ENCODE measurements at regions of chr17 and their contacts with region 1.

Region 1: GRCh38 chr17:29369831-29370735 is 20.1 kb upstream of the TAOK1 start:
- DNase-seq: peak; percentile 82
- ATAC-seq: peak; percentile 94
- H3K4me3 ChIP-seq: peak overlapping the region in 2 of 5 experiments; percentile 20 to 25
- H3K4me3 Mint-ChIP-seq: no peak overlapping the region
- H3K27ac ChIP-seq: no peak overlapping the region
- H3K27ac Mint-ChIP-seq: no peak overlapping the region
- H3K4me1 ChIP-seq: peaks cover 0 to 7% of the 10 kb centered on the region in 2 donors
- H3K4me1 Mint-ChIP-seq: no peaks in the 10 kb centered on the region
- H3K27me3 ChIP-seq: no peaks in the 10 kb centered on the region
- H3K27me3 Mint-ChIP-seq: no peaks in the 10 kb centered on the region
- CTCF ChIP-seq: peak; percentile 86

Region 2: GRCh38 chr17:29148790-29149430 is 221.2 kb before region 1 on chr17:
- CTCF ChIA-PET with region 1: interaction called, 15 read pairs
- POLR2A ChIA-PET with region 1: no interaction called
- intact Hi-C with region 1: no loop called
- DNase-seq: peak; percentile 96
- ATAC-seq: peak; percentile 96
- H3K4me3 ChIP-seq: peak overlapping the region; percentile 23 to 65 (median 49)
- H3K4me3 Mint-ChIP-seq: peak overlapping the region; percentile 88
- H3K27ac ChIP-seq: peak overlapping the region; percentile 85 to 88
- H3K27ac Mint-ChIP-seq: peak overlapping the region; percentile 93
- H3K4me1 ChIP-seq: peaks cover 34 to 39% of the 10 kb centered on the region in 2 donors
- H3K4me1 Mint-ChIP-seq: peaks cover 46% of the 10 kb centered on the region
- H3K27me3 ChIP-seq: no peaks in the 10 kb centered on the region
- H3K27me3 Mint-ChIP-seq: no peaks in the 10 kb centered on the region
- CTCF ChIP-seq: peak; percentile 96

Region 3: DNA sequence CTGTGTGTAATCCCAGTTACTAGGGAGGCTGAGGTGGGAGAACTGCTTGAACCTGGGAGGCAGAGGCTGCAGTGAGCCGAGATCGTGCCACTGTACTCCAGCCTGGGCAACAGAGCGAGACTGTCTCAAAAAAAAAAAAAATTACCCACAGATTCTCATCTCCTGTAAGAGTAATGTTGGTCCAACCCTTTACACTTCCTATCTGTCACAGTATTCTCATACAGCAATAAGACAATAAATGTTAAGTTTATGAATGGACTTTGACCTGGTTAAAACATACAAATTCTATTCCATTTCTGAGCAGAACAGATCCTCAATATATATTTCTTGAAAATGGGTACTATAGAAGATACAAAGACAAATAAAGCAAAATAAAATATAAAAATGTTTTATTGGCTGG is 10.3 kb before region 1 on chr17:
- CTCF ChIA-PET with region 1: interaction called, 11 read pairs
- POLR2A ChIA-PET with region 1: interaction called, 4 read pairs
- intact Hi-C with region 1: no loop called
- DNase-seq: no peak
- ATAC-seq: no peak
- H3K4me3 ChIP-seq: no peak overlapping the region
- H3K4me3 Mint-ChIP-seq: no peak overlapping the region
- H3K27ac ChIP-seq: no peak overlapping the region
- H3K27ac Mint-ChIP-seq: no peak overlapping the region
- H3K4me1 ChIP-seq: no peaks in the 10 kb centered on the region
- H3K4me1 Mint-ChIP-seq: peaks cover 2% of the 10 kb centered on the region
- H3K27me3 ChIP-seq: no peaks in the 10 kb centered on the region
- H3K27me3 Mint-ChIP-seq: peaks cover 3% of the 10 kb centered on the region
- CTCF ChIP-seq: no peak

Region 4: GRCh38 chr17:29389982-29390850 is 20.1 kb after region 1 on chr17 and contains the start of gene TAOK1:
- CTCF ChIA-PET with region 1: interaction called, 13 read pairs
- POLR2A ChIA-PET with region 1: no interaction called
- intact Hi-C with region 1: no loop called
- DNase-seq: peak; percentile 98
- ATAC-seq: peak; percentile 95
- H3K4me3 ChIP-seq: peak within 1 kb of the TSS; percentile 65 to 93 (median 76)
- H3K4me3 Mint-ChIP-seq: peak within 1 kb of the TSS; percentile 95
- H3K27ac ChIP-seq: peak within 1 kb of the TSS; percentile 64 to 96
- H3K27ac Mint-ChIP-seq: peak within 1 kb of the TSS; percentile 93
- H3K4me1 ChIP-seq: peaks cover 12 to 27% of the 10 kb centered on the region in 2 donors
- H3K4me1 Mint-ChIP-seq: peaks cover 38% of the 10 kb centered on the region
- H3K27me3 ChIP-seq: no peaks in the 10 kb centered on the region
- H3K27me3 Mint-ChIP-seq: no peaks in the 10 kb centered on the region
- CTCF ChIP-seq: no peak
- total RNA-seq, gene TAOK1: 78.8 and 80.7 TPM in 2 replicates

Region 5: DNA sequence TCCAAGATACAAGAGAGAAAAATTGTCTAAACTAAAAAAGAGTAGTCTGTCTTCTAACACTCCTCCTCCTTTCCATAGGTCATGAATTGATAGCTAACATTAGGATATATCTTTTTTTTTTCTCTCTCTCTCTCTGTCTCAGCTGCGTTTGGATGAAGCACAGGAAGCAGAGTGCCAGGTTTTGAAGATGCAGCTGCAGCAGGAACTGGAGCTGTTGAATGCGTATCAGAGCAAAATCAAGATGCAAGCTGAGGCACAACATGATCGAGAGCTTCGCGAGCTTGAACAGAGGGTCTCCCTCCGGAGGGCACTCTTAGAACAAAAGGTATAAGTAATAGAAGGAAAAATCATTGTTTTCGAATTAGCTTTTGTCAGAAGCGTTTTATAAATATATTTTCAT is 163.9 kb after region 1 on chr17:
- CTCF ChIA-PET with region 1: interaction called, 25 read pairs
- POLR2A ChIA-PET with region 1: no interaction called
- intact Hi-C with region 1: loop called (anchors 1 kb)
- DNase-seq: no peak
- ATAC-seq: no peak
- H3K4me3 ChIP-seq: no peak overlapping the region
- H3K4me3 Mint-ChIP-seq: no peak overlapping the region
- H3K27ac ChIP-seq: no peak overlapping the region
- H3K27ac Mint-ChIP-seq: no peak overlapping the region
- H3K4me1 ChIP-seq: no peaks in the 10 kb centered on the region
- H3K4me1 Mint-ChIP-seq: peaks cover 2% of the 10 kb centered on the region
- H3K27me3 ChIP-seq: no peaks in the 10 kb centered on the region
- H3K27me3 Mint-ChIP-seq: no peaks in the 10 kb centered on the region
- CTCF ChIP-seq: no peak

Region 6: GRCh38 chr17:29589524-29590410 is 219.7 kb after region 1 on chr17 and contains the start of gene GIT1:
- CTCF ChIA-PET with region 1: interaction called, 36 read pairs
- POLR2A ChIA-PET with region 1: no interaction called
- intact Hi-C with region 1: loop called (anchors 1 kb)
- DNase-seq: peak; percentile 90
- ATAC-seq: peak; percentile 82
- H3K4me3 ChIP-seq: peak within 1 kb of the TSS; percentile 58 to 96 (median 69)
- H3K4me3 Mint-ChIP-seq: peak within 1 kb of the TSS; percentile 91
- H3K27ac ChIP-seq: peak within 1 kb of the TSS; percentile 46 to 51
- H3K27ac Mint-ChIP-seq: peak within 1 kb of the TSS; percentile 94
- H3K4me1 ChIP-seq: peaks cover 62 to 75% of the 10 kb centered on the region in 2 donors
- H3K4me1 Mint-ChIP-seq: peaks cover 69% of the 10 kb centered on the region
- H3K27me3 ChIP-seq: peaks cover 0 to 7% (median 2%) of the 10 kb centered on the region in 4 experiments
- H3K27me3 Mint-ChIP-seq: no peaks in the 10 kb centered on the region
- CTCF ChIP-seq: no peak
- total RNA-seq, gene GIT1: 61.9 and 66.3 TPM in 2 replicates

Region 7: GRCh38 chr17:30093463-30094147 is 723.5 kb after region 1 on chr17:
- CTCF ChIA-PET with region 1: interaction called, 11 read pairs
- POLR2A ChIA-PET with region 1: no interaction called
- intact Hi-C with region 1: no loop called
- DNase-seq: peak; percentile 75
- ATAC-seq: peak; percentile 57
- H3K4me3 ChIP-seq: no peak overlapping the region
- H3K4me3 Mint-ChIP-seq: no peak overlapping the region
- H3K27ac ChIP-seq: no peak overlapping the region
- H3K27ac Mint-ChIP-seq: no peak overlapping the region
- H3K4me1 ChIP-seq: peaks cover 6 to 7% of the 10 kb centered on the region in 2 donors
- H3K4me1 Mint-ChIP-seq: peaks cover 12% of the 10 kb centered on the region
- H3K27me3 ChIP-seq: peaks cover 0 to 9% (median 8%) of the 10 kb centered on the region in 4 experiments
- H3K27me3 Mint-ChIP-seq: peaks cover 12% of the 10 kb centered on the region
- CTCF ChIP-seq: peak; percentile 90

Measured in B cell (primary cell).